Activated CD8-positive, alpha-beta T cell treated with anti-CD3 and anti-CD28 coated beads, Interleukin-2, amount 10 ng/mL, durations not matched to agents 7 days and 5 days (primary cell): ENCODE measurements at regions of chr2 and their contacts with region 1.

Region 1: GRCh38 chr2:71068218-71069035 is at the start of gene NAGK:
- DNase-seq: peak; percentile 97
- ATAC-seq: peak; percentile 90
- H3K4me3 Mint-ChIP-seq: peak within 1 kb of the TSS; percentile 96
- H3K27ac Mint-ChIP-seq: peak within 1 kb of the TSS; percentile 99
- H3K4me1 Mint-ChIP-seq: peaks cover 56% of the 10 kb centered on the region
- H3K27me3 Mint-ChIP-seq: no peaks in the 10 kb centered on the region
- total RNA-seq, gene NAGK: 68.3 to 75.3 TPM

Region 2: DNA sequence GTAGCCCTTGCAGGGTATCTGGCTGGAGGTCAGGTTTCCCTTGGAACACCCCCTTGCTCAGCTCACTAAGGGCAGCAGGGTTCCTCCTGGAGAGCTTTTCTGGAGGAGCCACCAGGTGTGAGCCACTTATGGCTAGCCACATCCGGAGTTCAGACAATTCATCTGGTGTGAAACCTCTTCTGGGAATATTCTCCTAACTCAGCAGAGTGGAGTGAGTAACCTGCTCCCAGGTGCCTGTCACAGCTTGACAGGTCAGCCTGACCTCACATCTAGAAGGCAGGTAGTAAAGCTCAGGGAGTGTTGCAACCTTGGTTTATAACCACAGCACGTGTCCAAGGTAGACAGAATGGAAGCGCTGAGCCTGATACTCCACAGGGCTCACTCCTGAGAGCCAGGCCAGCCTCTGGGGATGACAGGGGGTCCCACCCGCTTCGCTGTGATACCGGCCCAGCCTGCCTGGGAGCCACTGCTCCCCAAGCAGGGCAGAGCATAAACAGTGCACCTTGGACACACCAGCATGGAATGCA is 452.2 kb before region 1 on chr2:
- CTCF ChIA-PET with region 1: no interaction called
- POLR2A ChIA-PET with region 1: no interaction called
- DNase-seq: no peak
- ATAC-seq: no peak
- H3K4me3 Mint-ChIP-seq: no peak overlapping the region
- H3K27ac Mint-ChIP-seq: no peak overlapping the region
- H3K4me1 Mint-ChIP-seq: peaks cover 5% of the 10 kb centered on the region
- H3K27me3 Mint-ChIP-seq: peaks cover 16% of the 10 kb centered on the region

Region 3: DNA sequence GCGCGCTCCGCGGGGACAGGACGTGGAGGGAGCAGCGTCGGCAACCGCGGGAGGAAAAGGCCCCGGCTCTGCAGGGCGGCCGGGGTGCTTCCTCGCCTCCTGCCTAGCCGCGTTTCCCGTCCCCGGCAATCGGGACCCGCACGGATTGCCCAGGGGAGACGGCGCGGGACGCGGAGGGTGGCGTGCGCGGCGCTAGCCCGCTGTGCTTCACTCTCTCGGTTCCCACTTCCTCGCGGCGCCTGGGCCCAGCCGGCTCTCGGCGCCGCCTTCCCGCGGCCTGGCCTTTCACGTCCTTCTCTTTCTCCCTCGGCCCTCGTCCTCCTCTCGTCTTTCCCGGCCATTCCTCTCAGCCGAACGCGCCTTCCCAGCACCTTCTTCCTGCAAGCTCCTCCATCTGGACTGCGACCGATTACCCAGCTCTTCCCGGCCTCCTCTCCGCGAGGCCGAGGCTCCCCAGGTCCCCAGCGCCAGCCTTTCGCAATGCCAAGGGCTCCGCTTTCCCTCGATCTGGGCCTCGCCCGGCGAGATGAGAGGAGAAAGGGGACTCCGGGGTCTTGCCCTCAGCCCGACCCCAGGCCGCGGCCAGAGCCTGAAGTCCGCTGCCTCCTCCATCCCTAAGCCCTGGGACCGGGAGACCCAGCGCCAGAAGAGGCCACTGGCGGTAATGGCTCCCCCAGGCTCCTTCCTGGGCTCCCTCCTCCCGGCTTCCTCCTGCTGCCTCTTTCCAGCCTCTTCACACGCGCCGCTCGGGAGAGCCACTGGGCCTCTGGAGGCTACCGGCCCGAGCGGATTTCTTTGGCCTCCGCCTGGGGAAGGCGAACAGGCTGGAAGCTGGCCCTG is 167.0 kb before region 1 on chr2:
- CTCF ChIA-PET with region 1: no interaction called
- POLR2A ChIA-PET with region 1: no interaction called
- DNase-seq: no peak
- ATAC-seq: no peak
- H3K4me3 Mint-ChIP-seq: peak overlapping the region; percentile 22
- H3K27ac Mint-ChIP-seq: no peak overlapping the region
- H3K4me1 Mint-ChIP-seq: peaks cover 7% of the 10 kb centered on the region
- H3K27me3 Mint-ChIP-seq: peaks cover 91% of the 10 kb centered on the region

Region 4: DNA sequence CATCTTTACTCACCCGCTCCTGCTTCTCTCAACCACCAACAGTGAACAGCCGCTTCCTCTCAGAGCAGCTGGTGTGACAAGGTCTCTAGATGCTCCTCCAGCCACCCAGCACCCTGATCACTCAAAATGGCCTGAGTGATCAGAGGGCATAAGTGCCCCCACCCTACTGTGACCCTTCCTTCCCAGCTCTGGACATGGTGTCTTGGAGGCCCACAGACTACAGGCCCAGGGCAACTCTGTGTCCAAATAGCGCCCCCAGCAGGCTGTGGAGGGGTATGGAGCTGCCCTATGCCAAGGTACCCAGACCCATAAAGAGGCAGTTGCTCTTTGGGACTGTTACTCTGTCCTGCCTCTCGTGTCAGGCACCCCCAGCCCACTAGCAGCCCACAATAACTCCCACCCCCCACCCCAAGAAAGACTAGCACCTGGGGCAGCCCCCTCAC is 108.0 kb before region 1 on chr2:
- CTCF ChIA-PET with region 1: no interaction called
- POLR2A ChIA-PET with region 1: no interaction called
- DNase-seq: peak; percentile 26
- ATAC-seq: no peak
- H3K4me3 Mint-ChIP-seq: no peak overlapping the region
- H3K27ac Mint-ChIP-seq: no peak overlapping the region
- H3K4me1 Mint-ChIP-seq: peaks cover 25% of the 10 kb centered on the region
- H3K27me3 Mint-ChIP-seq: peaks cover 25% of the 10 kb centered on the region

Region 5: DNA sequence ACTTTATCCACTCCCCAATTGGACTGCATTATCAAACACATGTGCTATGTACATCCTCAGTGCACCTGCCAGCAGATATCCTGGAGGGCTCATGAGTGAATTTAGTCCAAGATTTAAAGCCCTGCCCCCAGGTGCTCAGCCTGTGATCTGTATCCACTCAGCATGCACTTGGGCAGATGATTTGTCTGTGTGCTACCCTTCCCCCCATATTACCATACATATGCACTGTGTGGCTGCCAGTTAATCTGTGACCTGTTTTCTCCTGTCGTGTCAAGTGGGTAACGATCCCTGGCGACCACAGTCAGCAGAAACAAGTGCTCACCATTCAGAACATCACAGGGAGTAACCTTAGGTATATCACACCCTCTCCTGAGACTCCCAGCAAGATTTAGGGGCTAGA is 10.2 kb after region 1 on chr2:
- CTCF ChIA-PET with region 1: interaction called, 4 read pairs
- POLR2A ChIA-PET with region 1: interaction called, 16 read pairs
- DNase-seq: no peak
- ATAC-seq: no peak
- H3K4me3 Mint-ChIP-seq: no peak overlapping the region
- H3K27ac Mint-ChIP-seq: no peak overlapping the region
- H3K4me1 Mint-ChIP-seq: peaks cover 11% of the 10 kb centered on the region
- H3K27me3 Mint-ChIP-seq: no peaks in the 10 kb centered on the region

Region 6: GRCh38 chr2:71130113-71130904 is 61.9 kb after region 1 on chr2 and contains the starts of genes MCEE and MPHOSPH10:
- CTCF ChIA-PET with region 1: interaction called, 11 read pairs
- POLR2A ChIA-PET with region 1: interaction called, 38 read pairs
- DNase-seq: peak; percentile 92
- ATAC-seq: peak; percentile 96
- H3K4me3 Mint-ChIP-seq: no peak within 1 kb of the TSS
- H3K27ac Mint-ChIP-seq: no peak within 1 kb of the TSS
- H3K4me1 Mint-ChIP-seq: peaks cover 10% of the 10 kb centered on the region
- H3K27me3 Mint-ChIP-seq: no peaks in the 10 kb centered on the region
- total RNA-seq, gene MCEE: 12.4 to 14.7 TPM
- total RNA-seq, gene MPHOSPH10: 39.9 to 40.1 TPM

Region 7: DNA sequence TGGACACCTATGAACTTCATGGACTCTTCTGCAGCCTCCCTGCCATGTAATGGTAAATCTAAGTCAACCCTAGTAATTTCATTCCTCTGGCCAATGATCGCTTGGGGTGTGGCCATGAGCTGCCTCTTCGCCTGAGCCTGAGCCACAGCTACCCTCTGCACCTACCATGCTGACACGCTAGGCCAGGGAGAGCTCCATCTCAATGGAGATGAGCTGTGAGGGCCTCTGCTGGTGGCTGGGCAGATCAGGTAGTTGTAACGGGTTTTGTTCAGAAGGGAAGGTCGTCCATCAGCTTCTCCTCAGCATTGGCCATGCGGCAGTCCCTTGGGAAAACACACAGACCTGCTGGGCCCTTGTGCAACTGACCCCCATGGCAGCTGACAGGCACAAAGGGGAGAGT is 86.4 kb after region 1 on chr2:
- CTCF ChIA-PET with region 1: interaction called, 10 read pairs
- POLR2A ChIA-PET with region 1: interaction called, 3 read pairs
- DNase-seq: peak; percentile 35
- ATAC-seq: peak; percentile 67
- H3K4me3 Mint-ChIP-seq: no peak overlapping the region
- H3K27ac Mint-ChIP-seq: no peak overlapping the region
- H3K4me1 Mint-ChIP-seq: peaks cover 6% of the 10 kb centered on the region
- H3K27me3 Mint-ChIP-seq: peaks cover 3% of the 10 kb centered on the region

Region 8: GRCh38 chr2:71250945-71251344 is 182.5 kb after region 1 on chr2:
- CTCF ChIA-PET with region 1: no interaction called
- POLR2A ChIA-PET with region 1: no interaction called
- DNase-seq: no peak
- ATAC-seq: no peak
- H3K4me3 Mint-ChIP-seq: no peak overlapping the region
- H3K27ac Mint-ChIP-seq: no peak overlapping the region
- H3K4me1 Mint-ChIP-seq: no peaks in the 10 kb centered on the region
- H3K27me3 Mint-ChIP-seq: peaks cover 28% of the 10 kb centered on the region